HEK293 (cell line): ENCODE measurements at regions of chr22 and their contacts with region 1.

Region 1: DNA sequence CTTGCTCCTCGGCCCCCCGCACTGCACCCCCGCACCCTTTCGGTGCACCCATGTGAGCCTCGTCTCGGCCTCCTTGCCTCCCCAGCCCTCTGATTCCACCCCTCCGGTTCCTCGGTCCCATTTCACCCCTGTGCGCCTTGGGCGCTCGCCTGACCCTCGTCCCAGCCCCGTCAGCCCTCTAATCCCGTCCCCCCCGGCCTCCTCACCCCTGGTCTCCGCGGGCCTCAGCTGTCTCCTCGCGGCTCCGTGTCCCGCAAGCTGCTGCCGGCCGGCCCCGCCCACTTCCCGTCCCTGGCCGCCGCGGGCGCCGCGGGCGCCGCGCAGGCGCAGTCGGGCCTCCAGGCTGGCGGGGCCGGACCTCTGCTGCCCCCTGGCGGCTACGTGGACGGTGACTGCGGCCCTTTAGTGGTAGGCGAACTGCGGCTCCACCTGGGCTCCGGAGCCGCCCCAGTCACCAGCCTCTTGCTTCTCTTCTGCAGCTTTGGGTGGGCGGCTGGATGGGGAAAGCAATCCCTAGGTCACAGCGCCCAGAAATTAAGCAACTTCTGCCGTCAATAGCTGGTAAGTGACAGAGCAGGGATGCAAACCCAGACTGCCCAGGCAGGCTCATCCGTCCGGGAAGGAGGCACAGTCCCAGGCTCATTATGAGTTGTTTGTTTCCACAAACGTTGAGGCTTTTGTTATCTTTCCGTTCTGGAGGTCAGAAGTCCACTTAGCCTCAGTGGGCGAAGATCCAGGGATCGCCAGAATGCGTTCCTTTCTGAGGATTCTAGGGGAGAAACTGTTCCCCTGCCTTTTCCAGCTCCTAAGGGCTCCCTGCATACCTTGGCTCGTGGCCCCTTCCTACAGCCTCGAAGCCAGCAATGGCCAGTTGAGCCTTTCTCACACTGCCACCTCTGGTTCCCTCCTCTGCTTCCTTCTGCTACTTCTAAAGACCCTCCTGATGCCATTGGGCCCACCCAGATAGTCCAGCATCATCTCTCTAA is at the start of gene PPM1F:
- H3K4me3 ChIP-seq: peak within 1 kb of the TSS; percentile 64
- H3K27ac ChIP-seq: no peak within 1 kb of the TSS
- H3K4me1 ChIP-seq: no peaks in the 10 kb centered on the region
- CTCF ChIP-seq: peak; percentile 62

Region 2: DNA sequence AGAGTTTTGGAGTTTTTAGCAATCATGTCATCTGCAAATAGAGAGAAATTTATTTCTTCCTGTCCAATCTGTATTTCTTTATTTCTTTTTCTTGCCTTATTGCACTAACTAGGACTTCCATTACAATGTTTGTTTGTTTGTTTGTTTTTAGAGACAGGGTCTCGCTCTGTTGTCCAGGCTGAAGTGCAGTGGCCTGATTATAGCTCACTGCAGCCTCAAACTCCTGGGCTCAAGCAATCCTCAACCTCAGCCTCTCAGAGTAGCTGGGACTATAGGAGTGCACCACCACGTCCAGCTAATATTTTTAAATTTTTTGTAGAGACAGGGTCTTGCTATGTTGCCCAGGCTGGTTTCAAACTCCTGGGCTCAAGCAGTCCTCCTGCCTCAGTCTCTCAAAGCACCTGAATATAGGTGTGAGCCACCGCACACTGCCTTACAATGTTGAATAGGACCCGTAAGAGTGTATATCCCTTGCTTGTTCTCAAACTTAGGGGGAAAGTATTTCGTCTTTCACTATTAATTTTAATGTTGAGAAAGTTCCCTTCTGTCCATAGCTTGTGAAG is 55.8 kb before region 1 on chr22:
- CTCF ChIA-PET with region 1: interaction called, 11 read pairs
- POLR2A ChIA-PET with region 1: no interaction called
- H3K4me3 ChIP-seq: no peak overlapping the region
- H3K27ac ChIP-seq: no peak overlapping the region
- H3K4me1 ChIP-seq: no peaks in the 10 kb centered on the region
- CTCF ChIP-seq: no peak